ENCODE measurements at regions of chr11 and their contacts with region 1.

Region 1: DNA sequence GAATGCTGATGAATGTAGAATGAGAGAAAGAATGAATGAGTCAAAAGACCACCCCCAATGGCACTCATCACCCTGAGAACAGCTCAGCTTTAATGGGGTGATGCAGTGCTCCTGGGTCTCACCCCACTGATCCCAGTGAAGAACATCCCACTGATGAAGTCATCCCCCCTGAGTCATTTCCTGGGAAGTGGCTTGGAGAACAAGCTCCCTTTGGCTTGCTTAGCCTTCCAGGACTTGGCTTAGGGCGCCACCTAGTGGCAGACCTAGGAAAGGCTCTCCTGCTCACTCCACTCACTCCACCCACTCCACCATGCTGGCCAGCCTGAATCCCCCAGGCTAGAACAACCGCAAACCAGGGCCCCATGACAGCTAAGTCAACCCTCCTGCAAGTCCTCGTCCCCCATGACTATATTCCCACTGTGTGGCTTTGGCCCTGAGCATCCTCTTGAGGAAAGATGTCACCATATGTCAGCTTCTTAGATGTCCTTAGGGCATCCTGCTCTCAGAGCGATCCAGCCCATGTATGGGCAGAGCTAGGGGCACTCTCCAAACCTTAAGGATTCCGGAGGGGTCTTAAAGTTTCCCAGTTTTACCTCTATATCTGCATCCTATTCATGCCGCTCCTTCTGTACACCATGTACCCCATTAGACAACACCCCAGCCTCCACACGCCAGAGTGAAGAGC is 17.8 kb upstream of the TMPRSS13 start:
- DNase-seq: peak; percentile 70 to 77 (median 72)
- H3K4me3 ChIP-seq: no peak overlapping the region
- H3K4me3 Mint-ChIP-seq: peak overlapping the region in 7 of 8 donors; percentile 7 to 85 (median 47)
- H3K27ac ChIP-seq: no peak overlapping the region
- H3K27ac Mint-ChIP-seq: peak overlapping the region; percentile 38 to 97 (median 82)
- H3K4me1 ChIP-seq: peaks cover 73% of the 10 kb centered on the region
- H3K4me1 Mint-ChIP-seq: peaks cover 54 to 83% (median 70%) of the 10 kb centered on the region in 4 donors
- H3K27me3 ChIP-seq: no peaks in the 10 kb centered on the region
- H3K27me3 Mint-ChIP-seq: no peaks in the 10 kb centered on the region

Region 2: GRCh38 chr11:117426269-117426685 is 520.7 kb before region 1 on chr11:
- CTCF ChIA-PET with region 1: interaction called, 39 read pairs
- POLR2A ChIA-PET with region 1: no interaction called
- intact Hi-C with region 1: loop called (anchors 1 kb)
- DNase-seq: peak in 4 of 5 donors; percentile 42 to 59 (median 52)
- H3K4me3 ChIP-seq: no peak overlapping the region
- H3K4me3 Mint-ChIP-seq: peak overlapping the region in 4 of 8 donors; percentile 6 to 60 (median 36)
- H3K27ac ChIP-seq: no peak overlapping the region
- H3K27ac Mint-ChIP-seq: no peak overlapping the region
- H3K4me1 ChIP-seq: peaks cover 6% of the 10 kb centered on the region
- H3K4me1 Mint-ChIP-seq: peaks cover 0 to 13% (median under 1%) of the 10 kb centered on the region in 4 donors
- H3K27me3 ChIP-seq: no peaks in the 10 kb centered on the region
- H3K27me3 Mint-ChIP-seq: peaks cover 0 to 1% of the 10 kb centered on the region in 2 donors

Region 3: GRCh38 chr11:117663821-117664220 is 283.2 kb before region 1 on chr11:
- CTCF ChIA-PET with region 1: no interaction called
- POLR2A ChIA-PET with region 1: no interaction called
- intact Hi-C with region 1: no loop called
- DNase-seq: no peak
- H3K4me3 ChIP-seq: no peak overlapping the region
- H3K4me3 Mint-ChIP-seq: no peak overlapping the region
- H3K27ac ChIP-seq: no peak overlapping the region
- H3K27ac Mint-ChIP-seq: no peak overlapping the region
- H3K4me1 ChIP-seq: no peaks in the 10 kb centered on the region
- H3K4me1 Mint-ChIP-seq: no peaks in the 10 kb centered on the region
- H3K27me3 ChIP-seq: no peaks in the 10 kb centered on the region
- H3K27me3 Mint-ChIP-seq: peaks cover 5% of the 10 kb centered on the region in 2 donors

Region 4: DNA sequence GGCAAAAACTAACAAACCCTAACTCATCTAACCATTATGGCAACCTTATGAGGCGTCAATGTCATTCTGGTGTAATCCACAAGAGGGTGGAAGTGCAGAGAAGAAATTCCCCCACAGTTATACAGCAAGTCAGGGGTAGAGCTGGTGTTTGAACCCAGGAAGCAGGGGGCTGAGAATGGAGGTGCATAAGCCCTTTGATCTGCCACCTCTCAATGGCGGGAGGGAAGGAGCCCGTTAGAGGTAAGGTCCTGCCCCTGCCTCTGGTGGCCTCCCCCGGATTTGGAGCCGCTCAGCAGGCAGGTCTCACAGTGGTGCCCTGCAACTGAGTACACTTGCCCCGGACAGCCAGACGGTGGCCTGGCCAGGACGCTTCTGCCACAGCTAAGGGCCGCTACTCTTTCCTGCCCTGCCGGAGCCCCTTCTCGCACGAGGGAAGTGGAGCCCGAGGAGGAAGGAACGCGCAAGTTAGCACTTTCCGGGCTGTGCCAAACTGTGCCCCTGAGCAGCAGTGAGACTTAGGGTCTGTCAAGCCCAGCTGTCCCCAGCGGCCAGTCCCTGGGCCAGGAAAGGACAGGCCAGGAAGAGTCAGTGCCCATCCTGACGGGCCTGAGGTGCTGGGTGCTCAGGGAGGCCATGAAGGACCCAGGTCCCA is 123.6 kb before region 1 on chr11:
- CTCF ChIA-PET with region 1: interaction called, 216 read pairs
- POLR2A ChIA-PET with region 1: interaction called, 21 read pairs
- intact Hi-C with region 1: loop called (anchors 1 kb)
- DNase-seq: peak; percentile 25 to 59 (median 44)
- H3K4me3 ChIP-seq: no peak overlapping the region
- H3K4me3 Mint-ChIP-seq: peak overlapping the region in 1 of 8 donors; percentile 52
- H3K27ac ChIP-seq: no peak overlapping the region
- H3K27ac Mint-ChIP-seq: peak overlapping the region in 5 of 7 donors; percentile 19 to 77 (median 68)
- H3K4me1 ChIP-seq: peaks cover 38% of the 10 kb centered on the region
- H3K4me1 Mint-ChIP-seq: peaks cover 20 to 61% (median 38%) of the 10 kb centered on the region in 4 donors
- H3K27me3 ChIP-seq: no peaks in the 10 kb centered on the region
- H3K27me3 Mint-ChIP-seq: no peaks in the 10 kb centered on the region

Region 5: GRCh38 chr11:117843666-117844484 is 103.1 kb before region 1 on chr11:
- CTCF ChIA-PET with region 1: interaction called, 226 read pairs
- POLR2A ChIA-PET with region 1: interaction called, 17 read pairs
- intact Hi-C with region 1: loop called (anchors 1 kb)
- DNase-seq: peak; percentile 72 to 79 (median 76)
- H3K4me3 ChIP-seq: no peak overlapping the region
- H3K4me3 Mint-ChIP-seq: no peak overlapping the region
- H3K27ac ChIP-seq: no peak overlapping the region
- H3K27ac Mint-ChIP-seq: peak overlapping the region in 2 of 7 donors; percentile 56 to 79
- H3K4me1 ChIP-seq: peaks cover 4% of the 10 kb centered on the region
- H3K4me1 Mint-ChIP-seq: peaks cover 0 to 8% (median 2%) of the 10 kb centered on the region in 4 donors
- H3K27me3 ChIP-seq: no peaks in the 10 kb centered on the region
- H3K27me3 Mint-ChIP-seq: no peaks in the 10 kb centered on the region

Region 6: DNA sequence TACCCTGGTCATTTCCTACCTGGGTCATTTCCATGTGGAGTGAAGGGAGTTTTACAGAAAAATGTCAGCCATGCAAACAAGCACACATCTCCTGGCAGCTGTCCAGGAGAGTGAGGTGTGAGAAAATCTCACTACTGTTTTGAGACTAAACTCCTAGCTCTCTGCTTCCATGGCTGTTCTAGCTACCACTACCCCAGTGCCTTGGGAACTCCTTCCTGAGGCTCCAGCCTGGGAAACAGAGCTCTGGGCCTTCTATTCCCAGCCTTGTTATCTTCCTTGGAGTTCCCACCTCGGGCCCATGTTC is 15.0 kb before region 1 on chr11:
- CTCF ChIA-PET with region 1: interaction called, 19 read pairs
- POLR2A ChIA-PET with region 1: interaction called, 7 read pairs
- intact Hi-C with region 1: no loop called
- DNase-seq: peak in 3 of 5 donors; percentile 19 to 29 (median 26)
- H3K4me3 ChIP-seq: no peak overlapping the region
- H3K4me3 Mint-ChIP-seq: peak overlapping the region in 4 of 8 donors; percentile 15 to 59 (median 29)
- H3K27ac ChIP-seq: no peak overlapping the region
- H3K27ac Mint-ChIP-seq: peak overlapping the region in 5 of 7 donors; percentile 9 to 70 (median 65)
- H3K4me1 ChIP-seq: peaks cover 42% of the 10 kb centered on the region
- H3K4me1 Mint-ChIP-seq: peaks cover 25 to 56% (median 47%) of the 10 kb centered on the region in 4 donors
- H3K27me3 ChIP-seq: peaks cover 3% of the 10 kb centered on the region
- H3K27me3 Mint-ChIP-seq: no peaks in the 10 kb centered on the region

Region 7: DNA sequence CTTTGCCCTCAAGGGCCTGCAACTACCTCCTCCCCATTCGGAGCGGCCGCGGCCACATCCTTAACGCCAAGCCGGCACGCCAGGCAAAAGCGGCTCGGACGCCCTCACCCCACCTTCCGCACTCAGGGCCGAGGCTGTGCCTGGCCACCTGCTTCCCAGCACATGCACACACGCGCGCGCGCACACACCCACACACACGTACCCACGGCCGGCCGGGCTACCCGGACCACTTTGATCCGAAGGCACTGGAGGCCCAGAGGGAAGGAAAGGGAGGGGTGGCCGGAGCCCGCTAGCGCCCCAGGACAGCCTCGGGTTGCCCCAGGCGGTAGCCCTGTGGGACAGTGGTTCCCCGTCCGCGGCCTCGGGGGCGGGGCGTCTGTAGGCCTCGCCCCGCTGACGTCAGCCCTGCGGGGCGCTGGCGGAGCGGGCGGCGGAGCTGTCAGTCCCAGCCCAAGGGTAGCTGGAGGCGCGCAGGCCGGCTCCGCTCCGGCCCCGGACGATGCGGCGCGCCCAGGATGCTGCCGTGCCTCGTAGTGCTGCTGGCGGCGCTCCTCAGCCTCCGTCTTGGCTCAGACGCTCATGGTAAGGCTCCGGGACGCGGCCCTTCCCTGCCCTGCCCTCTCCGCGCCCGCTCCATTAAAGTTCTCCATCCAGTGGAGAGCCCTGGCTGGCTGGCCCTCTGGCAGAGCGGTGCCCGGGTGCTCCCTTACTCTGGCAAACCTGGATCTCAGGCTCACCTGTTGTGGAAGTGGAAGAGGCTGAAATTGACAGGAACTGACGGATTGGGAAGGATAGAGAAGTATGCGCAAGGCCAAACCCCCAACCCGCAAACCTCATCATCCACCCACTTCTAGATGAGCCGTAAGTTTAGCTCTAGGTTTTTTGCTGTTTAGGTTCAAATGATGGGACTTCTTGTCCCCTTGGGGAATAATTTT is 39.2 kb after region 1 on chr11 and contains the start of gene IL10RA:
- CTCF ChIA-PET with region 1: interaction called, 402 read pairs
- POLR2A ChIA-PET with region 1: interaction called, 1,750 read pairs
- intact Hi-C with region 1: loop called (anchors 1 kb)
- DNase-seq: peak; percentile 82 to 85 (median 84)
- H3K4me3 ChIP-seq: peak within 1 kb of the TSS; percentile 97 to 99
- H3K4me3 Mint-ChIP-seq: peak within 1 kb of the TSS; percentile 91 to 100 (median 94)
- H3K27ac ChIP-seq: peak within 1 kb of the TSS; percentile 98
- H3K27ac Mint-ChIP-seq: peak within 1 kb of the TSS; percentile 89 to 98 (median 96)
- H3K4me1 ChIP-seq: peaks cover 60% of the 10 kb centered on the region
- H3K4me1 Mint-ChIP-seq: peaks cover 41 to 86% (median 57%) of the 10 kb centered on the region in 4 donors
- H3K27me3 ChIP-seq: no peaks in the 10 kb centered on the region
- H3K27me3 Mint-ChIP-seq: no peaks in the 10 kb centered on the region
- total RNA-seq, gene IL10RA: 398 to 406 TPM

Region 8: DNA sequence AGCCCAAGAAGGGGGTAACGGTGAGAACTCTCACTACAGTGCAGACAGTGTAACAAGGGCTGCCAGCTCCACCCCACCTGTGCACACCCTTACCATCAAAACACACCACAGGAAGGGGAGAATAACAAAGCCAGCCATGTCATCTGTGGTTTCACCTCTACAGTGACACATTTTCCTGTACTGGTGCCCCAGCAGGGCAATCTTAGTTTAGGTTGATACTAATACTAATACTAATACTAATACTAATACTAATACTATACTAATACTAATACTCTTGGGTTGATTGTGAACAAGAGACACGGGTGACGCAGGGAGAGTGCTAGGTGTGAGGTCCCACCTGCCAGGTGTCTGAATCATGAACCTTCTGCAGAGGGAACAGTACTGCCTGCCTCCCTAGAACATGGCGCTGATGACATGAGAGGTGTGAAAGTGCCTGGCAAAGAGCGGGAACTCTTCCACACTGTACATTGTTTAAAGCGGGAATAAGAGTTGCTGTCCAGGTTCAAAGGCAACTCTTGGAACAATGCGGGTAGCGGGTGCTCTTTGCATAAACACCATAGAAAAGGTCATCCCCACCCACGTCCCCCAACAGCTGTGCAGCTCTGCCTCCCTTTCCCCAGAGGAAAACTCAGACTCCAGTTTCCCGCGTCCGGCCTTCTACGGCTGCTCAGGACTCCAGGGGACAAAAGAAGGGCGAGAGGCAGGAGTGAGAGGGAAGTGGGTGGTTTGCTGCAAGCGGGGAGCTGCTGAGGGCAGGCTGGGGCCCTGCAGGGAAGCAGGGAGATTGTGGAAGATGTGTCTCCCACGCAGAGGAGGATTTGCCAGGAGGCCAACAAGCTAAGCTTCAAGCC is 104.9 kb after region 1 on chr11:
- CTCF ChIA-PET with region 1: interaction called, 400 read pairs
- POLR2A ChIA-PET with region 1: interaction called, 258 read pairs
- intact Hi-C with region 1: loop called (anchors 1 kb)
- DNase-seq: peak; percentile 86 to 91 (median 89)
- H3K4me3 ChIP-seq: peak overlapping the region in 1 of 2 donors; percentile 33
- H3K4me3 Mint-ChIP-seq: peak overlapping the region in 7 of 8 donors; percentile 69 to 93 (median 80)
- H3K27ac ChIP-seq: peak overlapping the region; percentile 57
- H3K27ac Mint-ChIP-seq: peak overlapping the region; percentile 95 to 100 (median 99)
- H3K4me1 ChIP-seq: peaks cover 67% of the 10 kb centered on the region
- H3K4me1 Mint-ChIP-seq: peaks cover 45 to 68% (median 59%) of the 10 kb centered on the region in 4 donors
- H3K27me3 ChIP-seq: no peaks in the 10 kb centered on the region
- H3K27me3 Mint-ChIP-seq: peaks cover 0 to 2% of the 10 kb centered on the region in 2 donors